A549 (cell line): ENCODE measurements at regions of chr7 and their contacts with region 1.

Region 1: GRCh38 chr7:140316165-140316661 is 82.1 kb downstream of the SLC37A3 start:
- DNase-seq: peak; percentile 44 to 79
- ATAC-seq: peak; percentile 92 to 95
- H3K4me3 ChIP-seq: no peak overlapping the region
- H3K27ac ChIP-seq: peak overlapping the region; percentile 71 to 83
- H3K4me1 ChIP-seq: peaks cover 39% of the 10 kb centered on the region
- CTCF ChIP-seq: no peak
- EP300 ChIP-seq: no peak
- POLR2A ChIP-seq: no peak
- RAD21 ChIP-seq: no peak

Region 2: DNA sequence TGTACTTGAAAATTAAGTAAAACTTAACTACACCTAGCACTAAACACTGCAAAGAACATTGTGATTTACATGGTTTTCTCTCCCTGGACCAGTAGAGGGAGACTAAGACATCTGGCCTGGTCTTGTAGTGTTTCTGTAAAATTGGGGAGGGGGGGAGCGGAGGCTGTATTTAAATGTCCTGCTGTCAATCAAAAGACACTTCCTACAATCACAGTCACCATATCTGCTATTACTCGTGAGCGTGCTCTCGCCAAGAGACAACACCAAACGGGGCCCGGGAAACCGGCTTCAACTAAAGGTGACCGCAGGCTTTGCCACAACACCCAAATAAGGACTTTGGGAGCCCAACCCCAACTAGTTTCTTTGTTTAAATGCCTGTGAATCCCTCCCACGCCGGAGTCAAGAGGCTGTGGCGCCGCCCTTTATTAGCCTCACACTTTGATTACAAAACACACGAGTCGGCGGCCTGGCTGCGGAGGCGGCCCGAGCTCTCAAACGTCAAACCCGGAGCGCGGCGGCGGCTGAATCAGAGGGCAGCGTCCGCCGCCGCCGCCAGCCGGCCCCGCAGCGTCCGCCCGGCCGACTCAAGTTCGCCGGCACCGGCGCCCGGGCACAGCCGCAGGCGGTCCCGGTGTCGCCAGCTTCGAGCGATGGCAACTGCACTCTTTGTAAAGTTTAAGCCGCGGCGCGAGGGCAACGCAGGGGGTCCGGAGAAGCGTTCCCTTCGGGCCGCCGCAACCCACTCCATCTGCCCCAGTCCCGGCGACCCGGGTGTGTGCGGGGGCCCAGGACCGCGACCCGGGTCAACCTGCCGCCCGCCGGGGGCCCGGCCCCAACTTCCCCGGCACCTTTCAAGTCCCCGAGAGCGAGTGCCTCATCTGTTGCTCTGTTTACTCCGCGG is 140.7 kb before region 1 on chr7:
- CTCF ChIA-PET with region 1: interaction called, 3 read pairs
- POLR2A ChIA-PET with region 1: interaction called, 14 read pairs
- DNase-seq: peak; percentile 86 to 94
- ATAC-seq: peak; percentile 72 to 81
- H3K4me3 ChIP-seq: peak overlapping the region; percentile 92
- H3K27ac ChIP-seq: peak overlapping the region; percentile 87 to 91
- H3K4me1 ChIP-seq: peaks cover 11% of the 10 kb centered on the region; the same call in 1 of the 3 replicates
- CTCF ChIP-seq: peak; percentile 86
- EP300 ChIP-seq: no peak
- POLR2A ChIP-seq: no peak
- RAD21 ChIP-seq: peak; percentile 85 to 86

Region 3: DNA sequence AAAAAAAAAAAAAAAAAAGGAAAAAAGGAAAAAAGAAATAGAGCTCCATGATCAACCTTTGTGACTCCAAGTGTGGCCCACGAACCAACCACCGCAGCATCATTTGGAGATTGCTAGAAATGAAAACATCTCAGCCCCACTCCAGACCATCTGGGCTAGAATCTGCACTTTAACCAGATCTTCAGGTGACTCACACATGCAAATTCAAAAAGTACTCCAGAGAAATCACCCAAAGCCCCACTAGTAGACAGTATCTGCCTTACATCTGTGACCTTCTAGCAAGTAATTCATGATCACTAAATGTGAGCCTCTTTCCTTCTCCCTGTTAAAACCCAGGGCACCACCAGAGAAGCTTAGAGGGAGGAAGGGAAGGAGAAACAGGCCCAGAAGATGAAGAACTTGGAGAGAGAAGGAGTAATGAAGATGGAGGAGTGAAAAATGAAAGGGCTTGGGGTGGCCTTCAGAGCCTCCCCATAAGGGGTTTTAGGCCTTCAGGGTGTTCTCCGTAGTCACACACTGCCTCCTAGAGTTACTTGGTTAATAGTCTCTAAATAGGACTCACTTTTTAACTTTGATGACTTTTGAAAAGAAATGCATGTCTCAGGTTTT is 11.9 kb before region 1 on chr7:
- CTCF ChIA-PET with region 1: interaction called, 12 read pairs
- POLR2A ChIA-PET with region 1: no interaction called
- DNase-seq: peak in 1 of 2 experiments; percentile 37
- ATAC-seq: peak; percentile 65 to 83; a peak in 4 of 6 replicates
- H3K4me3 ChIP-seq: no peak overlapping the region
- H3K27ac ChIP-seq: no peak overlapping the region
- H3K4me1 ChIP-seq: peaks cover 11% of the 10 kb centered on the region; the same call in 1 of the 3 replicates
- CTCF ChIP-seq: peak; percentile 58
- EP300 ChIP-seq: no peak
- POLR2A ChIP-seq: no peak
- RAD21 ChIP-seq: peak; percentile 64 to 65